Sigmoid colon (tissue), 7 donors: ENCODE measurements at regions of chr3 and their contacts with region 1.

Region 1: GRCh38 chr3:73602170-73602569 is 22.6 kb downstream of the PDZRN3 start:
- DNase-seq: no peak
- H3K4me3 ChIP-seq: peak overlapping the region in 1 of 4 donors; percentile 14
- H3K27ac ChIP-seq: peak overlapping the region; percentile 64 to 96 (median 82)
- H3K4me1 ChIP-seq: peaks cover 0 to 100% (median 86%) of the 10 kb centered on the region in 4 donors
- H3K27me3 ChIP-seq: no peaks in the 10 kb centered on the region
- CTCF ChIP-seq: no peak
- EP300 ChIP-seq: peak in 1 of 4 donors; percentile 38
- POLR2A ChIP-seq: no peak

Region 2: DNA sequence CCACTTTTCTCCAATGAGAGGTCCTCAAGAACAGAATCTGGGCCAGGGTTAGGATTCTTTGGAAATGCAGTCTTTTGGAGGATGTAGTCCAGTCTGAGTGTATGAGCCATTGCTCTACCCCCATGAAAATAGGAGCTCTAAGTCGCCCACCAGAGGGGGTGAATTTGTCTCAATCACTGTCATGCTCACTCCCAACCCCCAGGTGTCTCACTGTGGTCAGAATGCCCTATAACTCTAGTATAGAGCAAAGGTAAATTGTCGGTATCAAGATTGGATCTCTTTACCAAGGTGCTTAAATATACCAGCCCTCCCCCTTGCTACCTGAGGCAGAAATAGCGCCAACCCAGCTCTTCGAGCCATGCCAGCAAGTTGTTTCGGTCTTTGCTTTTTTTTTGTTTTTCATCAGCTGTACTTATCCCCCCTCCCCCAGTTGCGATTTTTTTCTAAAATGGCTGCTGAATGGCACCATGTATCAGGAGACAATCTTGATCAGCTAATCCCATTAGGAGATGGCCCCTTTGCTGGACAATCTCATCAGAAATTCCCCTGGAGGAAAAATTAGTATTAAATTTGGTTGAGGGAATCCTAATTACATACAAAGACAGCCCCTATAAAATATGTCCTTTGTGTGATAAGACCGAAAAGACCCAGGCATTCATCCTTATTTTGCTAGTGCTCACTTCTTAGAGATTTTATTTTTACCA is 410.0 kb before region 1 on chr3:
- intact Hi-C with region 1: no loop called
- DNase-seq: no peak
- H3K4me3 ChIP-seq: no peak overlapping the region
- H3K27ac ChIP-seq: no peak overlapping the region
- H3K4me1 ChIP-seq: no peaks in the 10 kb centered on the region
- H3K27me3 ChIP-seq: no peaks in the 10 kb centered on the region
- CTCF ChIP-seq: no peak
- EP300 ChIP-seq: no peak
- POLR2A ChIP-seq: no peak

Region 3: DNA sequence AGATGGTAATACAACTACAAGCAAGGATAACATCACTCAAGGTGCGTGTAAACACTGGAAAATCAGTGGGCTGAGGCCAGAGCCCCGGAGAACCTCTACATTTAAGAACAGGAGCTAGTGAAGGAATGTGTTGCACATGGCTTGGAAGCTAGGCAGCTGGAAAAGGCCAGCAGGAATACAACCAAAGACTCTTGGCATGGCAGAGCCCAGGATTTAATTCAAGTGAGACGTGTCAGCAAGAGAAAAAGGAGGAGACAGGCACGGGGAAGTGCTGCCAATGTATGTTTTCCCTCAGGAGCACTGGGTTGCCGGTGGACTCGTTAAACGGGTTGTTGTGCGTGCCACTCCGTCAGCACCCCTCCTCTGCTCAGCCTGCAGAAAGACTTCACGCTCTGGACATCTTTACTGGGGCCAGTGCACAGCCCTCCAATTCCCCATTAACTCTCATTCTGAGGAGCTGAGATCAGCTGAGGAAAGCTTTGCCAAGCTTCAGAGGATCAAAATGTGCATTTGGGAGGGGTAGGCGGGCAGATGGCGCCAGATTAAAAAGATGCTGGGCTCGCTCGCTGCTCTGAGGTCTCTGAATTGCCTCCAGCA is 81.2 kb before region 1 on chr3:
- intact Hi-C with region 1: loop called (anchors 5 kb)
- DNase-seq: peak; percentile 97
- H3K4me3 ChIP-seq: peak overlapping the region; percentile 20 to 51 (median 48)
- H3K27ac ChIP-seq: peak overlapping the region; percentile 85 to 90 (median 86)
- H3K4me1 ChIP-seq: peaks cover 0 to 77% (median 64%) of the 10 kb centered on the region in 4 donors
- H3K27me3 ChIP-seq: no peaks in the 10 kb centered on the region
- CTCF ChIP-seq: no peak
- EP300 ChIP-seq: peak; percentile 78 to 97 (median 94)
- POLR2A ChIP-seq: peak in 1 of 2 donors; percentile 45

Region 4: DNA sequence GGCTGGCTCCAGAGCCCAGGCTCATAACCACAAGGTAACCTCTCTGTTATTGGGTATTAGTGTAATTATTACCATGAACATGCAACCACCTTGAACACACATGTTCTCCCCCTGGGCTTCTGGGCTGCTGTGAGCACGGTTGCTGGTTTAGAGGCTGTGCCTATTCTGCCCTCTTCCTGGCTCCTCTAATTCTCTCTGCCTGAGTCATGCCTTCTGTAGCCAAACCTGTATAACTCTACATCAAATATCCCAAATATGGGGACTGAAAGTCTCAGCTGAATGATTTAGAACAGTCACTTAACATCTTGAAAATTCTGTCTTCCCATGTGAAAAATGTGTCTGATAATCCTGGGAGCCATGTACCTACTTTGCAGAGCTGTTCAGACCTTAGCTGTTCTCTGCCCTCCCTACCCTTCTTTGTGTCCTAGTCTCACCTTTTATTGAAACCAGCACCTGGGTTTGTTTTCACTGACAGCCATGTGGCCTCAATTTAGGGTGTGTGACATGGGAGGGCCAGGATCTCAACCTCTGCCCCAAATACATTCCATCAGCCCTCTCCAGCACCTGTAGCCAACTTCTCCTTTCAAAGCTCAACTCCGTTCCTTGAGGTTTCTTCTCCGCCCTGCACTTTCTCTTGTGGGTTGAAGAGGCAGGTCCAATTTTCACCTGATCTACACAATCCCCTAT is 38.1 kb before region 1 on chr3:
- intact Hi-C with region 1: loop called (anchors 5 kb)
- DNase-seq: no peak
- H3K4me3 ChIP-seq: no peak overlapping the region
- H3K27ac ChIP-seq: peak overlapping the region; percentile 49 to 67 (median 58)
- H3K4me1 ChIP-seq: peaks cover 0 to 81% (median 73%) of the 10 kb centered on the region in 4 donors
- H3K27me3 ChIP-seq: no peaks in the 10 kb centered on the region
- CTCF ChIP-seq: no peak
- EP300 ChIP-seq: no peak
- POLR2A ChIP-seq: no peak